CD4-positive, alpha-beta T cell (primary cell): ENCODE measurements at regions of chr6 and their contacts with region 1.

Region 1: GRCh38 chr6:118864341-118865099 is 29.4 kb upstream of the ASF1A start:
- DNase-seq: no peak
- ATAC-seq: peak; percentile 49
- H3K4me3 ChIP-seq: peak overlapping the region; percentile 1
- H3K4me3 Mint-ChIP-seq: peak overlapping the region; percentile 75
- H3K27ac ChIP-seq: no peak overlapping the region
- H3K27ac Mint-ChIP-seq: peak overlapping the region; percentile 76
- H3K4me1 ChIP-seq: peaks cover 25% of the 10 kb centered on the region
- H3K4me1 Mint-ChIP-seq: peaks cover 51% of the 10 kb centered on the region
- H3K27me3 ChIP-seq: no peaks in the 10 kb centered on the region
- H3K27me3 Mint-ChIP-seq: no peaks in the 10 kb centered on the region
- CTCF ChIP-seq: no peak

Region 2: GRCh38 chr6:117629119-117629518 is 1235.4 kb before region 1 on chr6:
- CTCF ChIA-PET with region 1: no interaction called
- POLR2A ChIA-PET with region 1: no interaction called
- intact Hi-C with region 1: no loop called
- DNase-seq: no peak
- ATAC-seq: no peak
- H3K4me3 ChIP-seq: no peak overlapping the region
- H3K4me3 Mint-ChIP-seq: no peak overlapping the region
- H3K27ac ChIP-seq: no peak overlapping the region
- H3K27ac Mint-ChIP-seq: no peak overlapping the region
- H3K4me1 ChIP-seq: no peaks in the 10 kb centered on the region
- H3K4me1 Mint-ChIP-seq: no peaks in the 10 kb centered on the region
- H3K27me3 ChIP-seq: no peaks in the 10 kb centered on the region
- H3K27me3 Mint-ChIP-seq: peaks cover 10% of the 10 kb centered on the region
- CTCF ChIP-seq: no peak

Region 3: DNA sequence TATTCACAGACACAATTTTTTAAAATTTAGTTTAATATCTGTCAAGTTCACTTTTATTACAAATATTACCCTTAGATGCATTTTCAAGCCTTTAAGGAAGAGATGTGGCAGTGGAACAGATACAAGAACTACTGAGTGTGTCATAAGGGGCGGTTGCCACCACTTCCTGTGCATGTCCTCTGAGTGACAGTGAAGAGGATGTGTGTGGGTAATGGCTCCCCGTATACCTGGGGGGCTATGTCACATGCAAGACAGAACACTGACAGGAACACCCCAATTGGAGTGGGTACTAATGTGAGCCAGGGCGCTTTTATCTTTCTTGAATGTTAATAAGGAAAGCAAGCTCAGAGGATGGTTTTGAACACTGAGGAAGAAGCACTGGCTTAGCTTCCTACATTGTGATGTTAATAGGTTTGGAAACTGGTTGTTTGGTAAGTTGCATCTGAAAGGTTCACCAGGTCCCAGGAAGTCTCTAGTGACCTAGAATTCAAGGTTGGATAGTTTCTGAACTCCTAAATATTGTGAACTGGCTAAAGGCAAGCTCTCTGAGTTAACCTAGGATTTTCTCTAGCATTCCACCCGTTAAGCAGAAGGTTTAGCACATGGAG is 54.0 kb before region 1 on chr6:
- CTCF ChIA-PET with region 1: no interaction called
- POLR2A ChIA-PET with region 1: no interaction called
- intact Hi-C with region 1: loop called in 1 of 2 experiments (anchors 10 kb)
- DNase-seq: peak; percentile 25 to 95 (median 56)
- ATAC-seq: peak; percentile 98
- H3K4me3 ChIP-seq: peak overlapping the region; percentile 15
- H3K4me3 Mint-ChIP-seq: peak overlapping the region; percentile 81
- H3K27ac ChIP-seq: peak overlapping the region in 1 of 2 donors; percentile 62
- H3K27ac Mint-ChIP-seq: peak overlapping the region; percentile 87
- H3K4me1 ChIP-seq: peaks cover 22% of the 10 kb centered on the region
- H3K4me1 Mint-ChIP-seq: peaks cover 61% of the 10 kb centered on the region
- H3K27me3 ChIP-seq: no peaks in the 10 kb centered on the region
- H3K27me3 Mint-ChIP-seq: no peaks in the 10 kb centered on the region
- CTCF ChIP-seq: no peak

Region 4: GRCh38 chr6:118853408-118853807 is 11.1 kb before region 1 on chr6:
- CTCF ChIA-PET with region 1: no interaction called
- POLR2A ChIA-PET with region 1: no interaction called
- intact Hi-C with region 1: no loop called
- DNase-seq: no peak
- ATAC-seq: no peak
- H3K4me3 ChIP-seq: no peak overlapping the region
- H3K4me3 Mint-ChIP-seq: no peak overlapping the region
- H3K27ac ChIP-seq: no peak overlapping the region
- H3K27ac Mint-ChIP-seq: no peak overlapping the region
- H3K4me1 ChIP-seq: no peaks in the 10 kb centered on the region
- H3K4me1 Mint-ChIP-seq: peaks cover 8% of the 10 kb centered on the region
- H3K27me3 ChIP-seq: no peaks in the 10 kb centered on the region
- H3K27me3 Mint-ChIP-seq: no peaks in the 10 kb centered on the region
- CTCF ChIP-seq: no peak